H1 (cell line): ENCODE measurements at regions of chr17 and their contacts with region 1.

Region 1: DNA sequence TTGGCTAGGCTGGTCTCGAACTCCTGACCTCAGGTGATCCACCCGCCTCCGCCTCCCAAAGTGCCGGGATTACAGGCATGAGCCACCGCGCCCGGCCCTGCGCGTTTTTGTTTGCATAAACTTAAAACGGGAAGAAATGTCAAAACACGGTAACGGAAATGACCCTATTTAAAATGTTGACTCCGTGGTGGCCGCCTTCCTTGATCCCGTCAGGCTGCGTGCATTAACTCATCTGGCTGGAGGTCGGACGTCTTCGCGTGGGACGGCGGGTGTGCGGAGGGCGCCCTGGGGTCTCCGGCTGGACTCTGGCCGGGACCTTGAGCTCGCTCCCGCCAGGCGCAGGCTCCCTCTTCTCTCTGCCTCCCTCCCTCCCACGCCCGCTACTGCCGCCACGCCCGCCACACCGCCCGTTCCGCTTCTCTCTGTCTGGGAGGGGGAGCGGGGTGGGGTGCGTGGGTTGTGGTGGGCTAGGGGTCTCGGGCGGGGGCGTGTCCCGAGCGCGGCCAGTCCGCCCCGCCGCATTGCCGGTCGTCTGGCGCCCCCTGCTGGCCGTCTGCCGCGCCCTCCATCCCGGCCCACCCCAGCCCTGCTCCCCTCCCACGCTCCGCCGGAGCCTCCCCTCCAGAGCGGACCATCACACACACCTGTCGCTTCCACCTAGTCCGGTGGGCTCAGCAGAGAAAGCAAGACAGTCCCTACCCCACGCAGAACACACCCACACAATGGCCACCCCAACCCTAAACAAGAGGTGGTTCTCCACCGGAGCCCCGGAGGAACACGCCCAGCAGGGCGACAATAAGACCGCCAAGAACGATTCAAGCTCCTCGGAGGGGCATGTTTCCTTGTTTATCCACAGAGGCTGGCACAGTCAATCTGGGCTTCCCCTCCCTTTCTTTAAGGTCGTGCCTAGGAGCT is 1.2 kb upstream of the CCDC42 start:
- DNase-seq: peak in 1 of 2 experiments; percentile 93
- H3K4me3 ChIP-seq: peak overlapping the region; percentile 61 to 80 (median 62)
- H3K27ac ChIP-seq: no peak overlapping the region
- H3K4me1 ChIP-seq: peaks cover 0 to 5% (median 0%) of the 10 kb centered on the region in 4 experiments; a peak in 2 of 7 replicates
- H3K27me3 ChIP-seq: peaks cover 0 to 5% (median 0%) of the 10 kb centered on the region in 4 experiments; a peak in 3 of 7 replicates
- CTCF ChIP-seq: peak; percentile 62 to 88 (median 73)
- EP300 ChIP-seq: no peak
- POLR2A ChIP-seq: no peak
- RAD21 ChIP-seq: peak; percentile 89

Region 2: DNA sequence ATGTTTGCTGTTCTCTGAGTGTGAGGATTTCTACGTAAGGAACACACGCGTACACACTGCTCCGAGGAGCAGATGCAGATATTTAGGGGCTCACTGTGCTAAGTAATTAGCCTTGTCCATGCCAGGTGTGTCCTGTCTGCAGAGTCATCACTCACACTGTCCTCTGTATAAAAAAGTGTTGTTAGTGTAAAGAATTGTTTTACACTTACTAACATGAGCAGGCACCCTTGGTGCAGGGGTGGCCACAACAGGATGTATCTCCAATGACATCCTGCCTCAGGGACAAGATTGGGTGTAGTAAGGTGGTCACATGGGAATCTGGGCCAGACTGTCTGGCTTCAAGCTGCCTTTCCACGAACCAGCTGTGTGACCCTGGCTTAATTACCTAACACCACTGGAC is 246.2 kb before region 1 on chr17:
- CTCF ChIA-PET with region 1: no interaction called
- POLR2A ChIA-PET with region 1: no interaction called
- DNase-seq: no peak
- H3K4me3 ChIP-seq: no peak overlapping the region
- H3K27ac ChIP-seq: no peak overlapping the region
- H3K4me1 ChIP-seq: no peaks in the 10 kb centered on the region
- H3K27me3 ChIP-seq: no peaks in the 10 kb centered on the region
- CTCF ChIP-seq: no peak
- EP300 ChIP-seq: no peak
- POLR2A ChIP-seq: no peak
- RAD21 ChIP-seq: no peak

Region 3: DNA sequence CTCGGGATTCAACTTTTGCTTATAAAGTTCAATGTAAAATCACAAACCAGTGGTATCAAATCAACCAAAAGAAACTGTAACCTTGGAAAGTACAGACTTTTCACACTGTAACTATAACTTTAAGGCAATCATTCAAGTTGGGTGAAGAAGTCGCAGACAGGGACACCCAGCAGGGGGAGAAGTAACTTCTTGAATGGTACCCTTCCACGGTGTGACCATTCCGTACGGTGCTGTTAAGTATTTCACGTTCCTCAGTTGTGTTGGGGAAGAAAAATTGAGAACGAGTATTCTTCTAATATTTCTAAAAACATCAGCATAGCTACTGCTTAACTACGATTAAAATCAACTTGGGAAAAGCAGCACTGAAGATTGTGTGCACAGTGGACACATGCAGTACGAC is 171.2 kb before region 1 on chr17:
- CTCF ChIA-PET with region 1: interaction called, 13 read pairs
- POLR2A ChIA-PET with region 1: interaction called, 3 read pairs
- DNase-seq: no peak
- H3K4me3 ChIP-seq: no peak overlapping the region
- H3K27ac ChIP-seq: no peak overlapping the region
- H3K4me1 ChIP-seq: no peaks in the 10 kb centered on the region
- H3K27me3 ChIP-seq: no peaks in the 10 kb centered on the region
- CTCF ChIP-seq: peak in 1 of 3 experiments; percentile 6; a peak in 1 of 4 replicates
- EP300 ChIP-seq: no peak
- POLR2A ChIP-seq: no peak
- RAD21 ChIP-seq: peak in 1 of 2 experiments; percentile 21; a peak in 1 of 4 replicates

Region 4: GRCh38 chr17:8581002-8581658 is 164.7 kb before region 1 on chr17:
- CTCF ChIA-PET with region 1: interaction called, 13 read pairs
- POLR2A ChIA-PET with region 1: interaction called, 3 read pairs
- DNase-seq: no peak
- H3K4me3 ChIP-seq: no peak overlapping the region
- H3K27ac ChIP-seq: no peak overlapping the region
- H3K4me1 ChIP-seq: peaks cover 0 to 4% (median 1%) of the 10 kb centered on the region in 4 experiments; a peak in 2 of 7 replicates
- H3K27me3 ChIP-seq: no peaks in the 10 kb centered on the region
- CTCF ChIP-seq: no peak
- EP300 ChIP-seq: no peak
- POLR2A ChIP-seq: no peak
- RAD21 ChIP-seq: no peak

Region 5: GRCh38 chr17:8708025-8708461 is 37.8 kb before region 1 on chr17:
- CTCF ChIA-PET with region 1: interaction called, 11 read pairs
- POLR2A ChIA-PET with region 1: no interaction called
- DNase-seq: no peak
- H3K4me3 ChIP-seq: no peak overlapping the region
- H3K27ac ChIP-seq: no peak overlapping the region
- H3K4me1 ChIP-seq: no peaks in the 10 kb centered on the region
- H3K27me3 ChIP-seq: no peaks in the 10 kb centered on the region
- CTCF ChIP-seq: no peak
- EP300 ChIP-seq: no peak
- POLR2A ChIP-seq: no peak
- RAD21 ChIP-seq: no peak

Region 6: GRCh38 chr17:8785547-8786413 is 39.9 kb after region 1 on chr17:
- CTCF ChIA-PET with region 1: interaction called, 15 read pairs
- POLR2A ChIA-PET with region 1: no interaction called
- DNase-seq: peak; percentile 78 to 99
- H3K4me3 ChIP-seq: no peak overlapping the region
- H3K27ac ChIP-seq: no peak overlapping the region
- H3K4me1 ChIP-seq: peaks cover 0 to 5% (median 3%) of the 10 kb centered on the region in 4 experiments; a peak in 5 of 7 replicates
- H3K27me3 ChIP-seq: no peaks in the 10 kb centered on the region; a peak in 2 of 7 replicates
- CTCF ChIP-seq: peak; percentile 75 to 93 (median 86)
- EP300 ChIP-seq: no peak
- POLR2A ChIP-seq: no peak
- RAD21 ChIP-seq: peak; percentile 92 to 94

Region 7: DNA sequence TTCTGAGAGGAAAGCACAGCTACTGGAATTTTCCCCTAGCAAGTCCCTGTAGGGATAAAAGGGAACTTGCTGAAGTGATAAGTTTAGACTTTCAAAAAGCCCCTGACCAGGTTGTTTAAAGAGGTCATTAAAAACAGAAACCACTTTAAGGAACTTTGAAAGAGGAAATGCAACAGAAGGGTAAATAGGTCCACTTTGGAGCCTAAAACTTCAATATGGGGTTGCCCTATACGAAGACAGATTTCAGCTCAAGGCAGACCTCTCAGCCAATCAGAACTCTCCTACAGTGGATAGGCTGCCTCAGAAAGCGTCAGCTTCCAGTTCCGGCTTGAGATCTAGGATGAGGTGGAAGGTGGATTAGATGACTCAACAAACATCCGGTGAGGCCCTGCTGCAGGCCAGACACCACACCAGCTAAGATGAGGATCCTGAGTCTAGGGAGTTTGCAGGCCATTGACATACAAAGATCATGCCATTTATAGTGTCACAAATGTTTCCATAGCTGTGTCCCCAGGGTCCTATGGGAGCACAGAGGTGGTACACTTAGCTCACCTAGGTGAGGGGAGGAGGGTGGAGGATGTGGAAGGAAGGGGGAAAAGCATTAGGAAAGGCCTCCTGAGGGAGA is 61.2 kb after region 1 on chr17:
- CTCF ChIA-PET with region 1: no interaction called
- POLR2A ChIA-PET with region 1: no interaction called
- DNase-seq: peak in 1 of 2 experiments; percentile 16
- H3K4me3 ChIP-seq: no peak overlapping the region
- H3K27ac ChIP-seq: no peak overlapping the region
- H3K4me1 ChIP-seq: peaks cover 0 to 9% (median 4%) of the 10 kb centered on the region in 4 experiments; a peak in 2 of 7 replicates
- H3K27me3 ChIP-seq: no peaks in the 10 kb centered on the region; a peak in 1 of 7 replicates
- CTCF ChIP-seq: no peak
- EP300 ChIP-seq: no peak
- POLR2A ChIP-seq: no peak
- RAD21 ChIP-seq: no peak